ENCODE measurements at regions of chr17 and their contacts with region 1.

Region 1: GRCh38 chr17:5486204-5487124 is at the start of gene MIS12:
- DNase-seq: peak; percentile 99
- H3K4me3 Mint-ChIP-seq: peak within 1 kb of the TSS; percentile 98
- H3K27ac Mint-ChIP-seq: peak within 1 kb of the TSS; percentile 99
- H3K4me1 Mint-ChIP-seq: peaks cover 52% of the 10 kb centered on the region
- H3K27me3 Mint-ChIP-seq: no peaks in the 10 kb centered on the region
- total RNA-seq, gene MIS12: 37.8 and 39.2 TPM in 2 replicates

Region 2: GRCh38 chr17:5281814-5282653 is 204.4 kb before region 1 on chr17 and contains the start of gene RABEP1:
- intact Hi-C with region 1: loop called (anchors 5 kb)
- DNase-seq: peak; percentile 98
- H3K4me3 Mint-ChIP-seq: peak within 1 kb of the TSS; percentile 91
- H3K27ac Mint-ChIP-seq: peak within 1 kb of the TSS; percentile 94
- H3K4me1 Mint-ChIP-seq: peaks cover 23% of the 10 kb centered on the region
- H3K27me3 Mint-ChIP-seq: peaks cover 2% of the 10 kb centered on the region
- total RNA-seq, gene RABEP1: 57.3 and 58.2 TPM in 2 replicates

Region 3: GRCh38 chr17:5419356-5419958 is 67.0 kb before region 1 on chr17 and contains the start of gene NUP88:
- intact Hi-C with region 1: loop called (anchors 1 kb)
- DNase-seq: peak; percentile 99
- H3K4me3 Mint-ChIP-seq: peak within 1 kb of the TSS; percentile 100
- H3K27ac Mint-ChIP-seq: peak within 1 kb of the TSS; percentile 100
- H3K4me1 Mint-ChIP-seq: peaks cover 33% of the 10 kb centered on the region
- H3K27me3 Mint-ChIP-seq: no peaks in the 10 kb centered on the region
- total RNA-seq, gene NUP88: 164 and 168 TPM in 2 replicates

Region 4: GRCh38 chr17:5468075-5468473 is 18.4 kb before region 1 on chr17:
- intact Hi-C with region 1: loop called (anchors 1 kb)
- DNase-seq: peak; percentile 74
- H3K4me3 Mint-ChIP-seq: peak overlapping the region; percentile 99
- H3K27ac Mint-ChIP-seq: peak overlapping the region; percentile 82
- H3K4me1 Mint-ChIP-seq: peaks cover 37% of the 10 kb centered on the region
- H3K27me3 Mint-ChIP-seq: no peaks in the 10 kb centered on the region

Region 5: DNA sequence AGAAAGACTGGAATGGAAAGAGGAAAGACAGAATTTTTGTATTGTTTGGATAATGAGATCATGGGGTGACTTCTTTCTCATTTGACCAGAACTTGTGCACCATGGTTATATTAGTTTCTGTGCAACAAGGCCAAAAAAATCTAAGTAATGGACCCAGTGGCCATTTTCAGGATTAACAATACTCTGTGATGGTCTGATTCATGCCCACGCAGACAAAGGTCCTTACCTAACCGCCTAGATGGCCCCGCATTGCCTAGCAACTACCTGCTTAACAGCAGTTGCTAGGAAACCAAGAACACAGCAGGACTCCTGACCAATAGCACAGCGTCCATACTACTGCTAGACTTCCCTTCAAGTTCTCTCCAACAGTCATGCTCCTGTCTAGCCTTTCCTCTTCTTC is 22.3 kb after region 1 on chr17:
- intact Hi-C with region 1: no loop called
- DNase-seq: no peak
- H3K4me3 Mint-ChIP-seq: no peak overlapping the region
- H3K27ac Mint-ChIP-seq: no peak overlapping the region
- H3K4me1 Mint-ChIP-seq: peaks cover 13% of the 10 kb centered on the region
- H3K27me3 Mint-ChIP-seq: no peaks in the 10 kb centered on the region

Region 6: DNA sequence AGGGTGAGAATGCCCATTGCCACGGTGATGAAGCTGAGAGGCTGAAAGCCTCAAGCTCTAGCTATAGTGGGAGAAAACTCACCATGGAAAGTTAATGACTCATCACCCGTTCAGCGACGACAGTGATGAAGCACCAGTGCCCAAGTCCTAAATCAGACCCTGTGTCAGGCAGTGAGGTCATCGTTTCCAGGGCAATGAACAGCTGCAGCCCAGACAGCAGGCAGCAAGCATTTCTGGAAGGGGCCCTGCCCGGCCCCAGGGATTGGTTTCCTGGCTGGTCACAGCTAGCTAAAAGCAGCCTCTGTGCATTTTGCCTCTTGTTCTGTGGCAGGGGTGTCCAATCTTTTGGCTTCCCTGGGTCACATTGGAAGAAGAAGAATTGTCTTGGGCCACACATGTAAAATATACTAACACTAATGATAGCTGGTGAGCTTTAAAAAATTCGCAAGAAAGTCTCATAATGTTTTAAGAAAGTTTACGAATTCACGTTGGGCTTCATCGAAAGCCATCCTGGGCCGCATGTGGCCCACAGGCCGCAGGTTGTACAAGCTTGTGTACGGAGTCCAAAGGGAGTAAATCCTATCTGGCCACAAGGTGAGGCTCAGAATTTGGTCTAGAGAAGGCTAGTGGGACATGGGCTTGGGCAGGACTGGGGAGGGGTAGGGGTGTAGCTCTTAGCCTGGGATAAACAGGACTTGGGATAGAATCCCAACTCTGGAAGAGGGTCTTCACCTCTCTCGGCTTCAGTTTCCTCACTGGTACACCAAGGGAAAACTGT is 40.5 kb after region 1 on chr17:
- intact Hi-C with region 1: loop called (anchors 5 kb)
- DNase-seq: peak; percentile 74
- H3K4me3 Mint-ChIP-seq: no peak overlapping the region
- H3K27ac Mint-ChIP-seq: peak overlapping the region; percentile 88
- H3K4me1 Mint-ChIP-seq: peaks cover 10% of the 10 kb centered on the region
- H3K27me3 Mint-ChIP-seq: no peaks in the 10 kb centered on the region

Region 7: GRCh38 chr17:5584383-5585286 is 98.2 kb after region 1 on chr17 and contains the start of gene NLRP1:
- intact Hi-C with region 1: loop called (anchors 1 kb)
- DNase-seq: peak; percentile 98
- H3K4me3 Mint-ChIP-seq: peak within 1 kb of the TSS; percentile 97
- H3K27ac Mint-ChIP-seq: peak within 1 kb of the TSS; percentile 96
- H3K4me1 Mint-ChIP-seq: peaks cover 53% of the 10 kb centered on the region
- H3K27me3 Mint-ChIP-seq: peaks cover 6% of the 10 kb centered on the region
- total RNA-seq, gene NLRP1: 19.6 and 23.0 TPM in 2 replicates

Region 8: GRCh38 chr17:6651357-6651918 is 1165.0 kb after region 1 on chr17 and contains the starts of genes C17orf100 and MED31:
- intact Hi-C with region 1: loop called (anchors 5 kb)
- DNase-seq: peak; percentile 99
- H3K4me3 Mint-ChIP-seq: peak within 1 kb of the TSS; percentile 93
- H3K27ac Mint-ChIP-seq: peak within 1 kb of the TSS; percentile 99
- H3K4me1 Mint-ChIP-seq: peaks cover 50% of the 10 kb centered on the region
- H3K27me3 Mint-ChIP-seq: peaks cover 16% of the 10 kb centered on the region
- total RNA-seq, gene C17orf100: 1.8 and 1.9 TPM in 2 replicates
- total RNA-seq, gene MED31: 24.3 and 25.7 TPM in 2 replicates

Measured in activated CD4-positive, alpha-beta T cell treated with anti-CD3 and anti-CD28 coated beads, Interleukin-2, amount 10 ng/mL, durations not matched to agents 24 days and 14 days (primary cell).